Cardiac septum (tissue), 1 donor: ENCODE measurements at regions of chr10 and their contacts with region 1.

Region 1: GRCh38 chr10:44300666-44301649 is 83.9 kb downstream of the CXCL12 start:
- DNase-seq: no peak

Region 2: DNA sequence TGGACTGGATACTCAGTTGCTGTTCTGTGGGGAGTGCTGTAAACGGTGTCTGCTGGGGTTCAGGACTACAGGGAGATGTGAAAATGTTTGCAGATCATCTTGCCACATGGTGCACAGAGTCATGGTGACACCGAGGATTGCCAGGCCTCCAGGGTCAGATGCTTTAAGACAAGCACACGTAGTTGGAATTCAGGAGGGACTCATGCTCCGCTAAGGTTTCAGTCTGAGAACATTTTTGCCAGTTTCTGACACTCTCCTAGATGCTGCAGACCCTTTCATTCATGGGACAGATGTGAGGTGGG is 127.4 kb before region 1 on chr10:
- intact Hi-C with region 1: loop called (anchors 5 kb)
- DNase-seq: no peak

Region 3: GRCh38 chr10:44513591-44513990 is 212.6 kb after region 1 on chr10:
- intact Hi-C with region 1: no loop called
- DNase-seq: no peak